PC-3 (cell line): ENCODE measurements at regions of chr1 and their contacts with region 1.

Region 1: GRCh38 chr1:244652699-244653466 is at the start of gene DESI2:
- DNase-seq: peak; percentile 99
- ATAC-seq: peak; percentile 93
- H3K4me3 ChIP-seq: peak within 1 kb of the TSS; percentile 91
- H3K27ac ChIP-seq: peak within 1 kb of the TSS; percentile 30
- H3K4me1 ChIP-seq: peaks cover 27% of the 10 kb centered on the region
- H3K27me3 ChIP-seq: no peaks in the 10 kb centered on the region
- CTCF ChIP-seq: peak; percentile 72
- total RNA-seq, gene DESI2: 58.7 and 81.8 TPM in 2 replicates

Region 2: DNA sequence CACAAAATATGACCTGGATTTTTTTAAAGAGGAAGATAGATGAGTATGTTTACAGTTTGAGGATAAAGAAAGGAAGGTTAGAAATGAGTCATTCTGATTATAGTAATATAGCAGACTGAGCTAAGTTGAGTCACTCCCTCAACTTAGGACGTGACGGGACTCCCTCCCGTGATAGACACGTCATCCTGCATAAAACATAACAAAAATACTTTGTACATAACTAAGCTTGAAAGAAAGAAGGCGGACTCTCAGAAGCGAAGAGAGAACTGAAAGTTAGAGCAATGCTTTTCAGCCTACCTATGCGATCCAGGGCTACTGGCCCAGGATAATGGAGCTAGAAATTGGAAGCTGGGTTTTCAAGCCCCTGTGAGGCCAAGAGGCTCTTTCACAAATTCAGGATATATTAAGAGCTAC is 52.9 kb before region 1 on chr1:
- CTCF ChIA-PET with region 1: no interaction called
- POLR2A ChIA-PET with region 1: interaction called, 3 read pairs
- intact Hi-C with region 1: loop called (anchors 1 kb)
- DNase-seq: peak; percentile 98
- ATAC-seq: peak; percentile 95
- H3K4me3 ChIP-seq: peak overlapping the region; percentile 65
- H3K27ac ChIP-seq: peak overlapping the region; percentile 55
- H3K4me1 ChIP-seq: peaks cover 13% of the 10 kb centered on the region
- H3K27me3 ChIP-seq: no peaks in the 10 kb centered on the region
- CTCF ChIP-seq: no peak

Region 3: GRCh38 chr1:244735404-244735803 is 82.5 kb after region 1 on chr1:
- CTCF ChIA-PET with region 1: no interaction called
- POLR2A ChIA-PET with region 1: interaction called, 14 read pairs
- intact Hi-C with region 1: loop called (anchors 2 kb)
- DNase-seq: no peak
- ATAC-seq: no peak
- H3K4me3 ChIP-seq: no peak overlapping the region
- H3K27ac ChIP-seq: peak overlapping the region; percentile 81
- H3K4me1 ChIP-seq: peaks cover 29% of the 10 kb centered on the region
- H3K27me3 ChIP-seq: no peaks in the 10 kb centered on the region
- CTCF ChIP-seq: no peak

Region 4: GRCh38 chr1:244835276-244836134 is 182.6 kb after region 1 on chr1 and contains the start of gene COX20:
- CTCF ChIA-PET with region 1: no interaction called
- POLR2A ChIA-PET with region 1: interaction called, 5 read pairs
- intact Hi-C with region 1: loop called (anchors 2 kb)
- DNase-seq: peak; percentile 95
- ATAC-seq: peak; percentile 59
- H3K4me3 ChIP-seq: peak within 1 kb of the TSS; percentile 94
- H3K27ac ChIP-seq: peak within 1 kb of the TSS; percentile 91
- H3K4me1 ChIP-seq: peaks cover 47% of the 10 kb centered on the region
- H3K27me3 ChIP-seq: no peaks in the 10 kb centered on the region
- CTCF ChIP-seq: no peak
- total RNA-seq, gene COX20: 50.0 and 55.8 TPM in 2 replicates

Region 5: DNA sequence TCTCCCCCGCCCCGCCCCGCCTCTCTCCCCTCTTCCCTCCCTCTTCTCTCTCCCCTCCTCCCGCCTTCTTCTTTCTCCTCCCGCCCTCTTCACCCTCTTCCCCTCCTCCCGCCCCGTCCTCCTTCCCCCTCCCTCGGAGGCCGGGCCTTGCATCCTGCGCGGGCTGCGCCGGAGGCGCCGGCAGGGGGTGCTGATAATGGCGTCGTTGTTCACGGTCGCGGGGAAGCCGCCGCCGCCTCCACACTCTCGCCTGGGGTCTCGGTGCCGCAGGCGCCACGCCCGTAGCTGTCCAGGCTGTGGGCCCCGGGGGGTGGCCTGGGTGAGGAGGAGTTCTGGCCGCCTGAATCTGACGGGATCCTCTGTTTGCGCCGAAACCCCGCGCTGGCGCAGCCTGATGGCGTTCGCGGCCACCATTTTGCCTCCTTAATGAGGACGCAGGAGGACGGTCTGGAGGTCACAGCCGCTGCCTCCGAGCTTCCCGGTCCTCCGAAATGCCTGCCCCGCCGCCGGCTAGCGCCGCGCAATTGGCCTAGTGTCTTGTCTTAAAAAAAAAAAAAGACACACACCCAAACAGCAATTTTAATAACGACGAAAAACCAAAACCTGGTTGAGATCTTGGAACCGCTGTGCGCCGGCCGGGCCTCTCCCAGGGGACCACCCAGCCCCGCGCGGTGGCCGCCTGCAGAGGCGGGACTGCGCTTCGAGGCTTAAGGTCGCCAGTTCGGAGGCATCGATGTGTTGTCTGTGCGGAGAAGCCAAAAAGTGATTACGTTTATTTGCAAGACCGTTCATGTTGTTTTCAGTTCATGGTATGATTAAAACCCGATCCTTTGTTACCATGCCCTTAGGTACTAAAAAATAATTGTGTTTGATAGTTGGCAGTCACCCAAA is 318.0 kb after region 1 on chr1:
- CTCF ChIA-PET with region 1: no interaction called
- POLR2A ChIA-PET with region 1: no interaction called
- intact Hi-C with region 1: loop called (anchors 1 kb)
- DNase-seq: peak; percentile 96
- ATAC-seq: peak; percentile 66
- H3K4me3 ChIP-seq: peak overlapping the region; percentile 74
- H3K27ac ChIP-seq: peak overlapping the region; percentile 95
- H3K4me1 ChIP-seq: peaks cover 17% of the 10 kb centered on the region
- H3K27me3 ChIP-seq: no peaks in the 10 kb centered on the region
- CTCF ChIP-seq: peak; percentile 65